Right ventricle myocardium inferior (tissue), 1 donor: ENCODE measurements at regions of chr3 and their contacts with region 1.

Region 1: DNA sequence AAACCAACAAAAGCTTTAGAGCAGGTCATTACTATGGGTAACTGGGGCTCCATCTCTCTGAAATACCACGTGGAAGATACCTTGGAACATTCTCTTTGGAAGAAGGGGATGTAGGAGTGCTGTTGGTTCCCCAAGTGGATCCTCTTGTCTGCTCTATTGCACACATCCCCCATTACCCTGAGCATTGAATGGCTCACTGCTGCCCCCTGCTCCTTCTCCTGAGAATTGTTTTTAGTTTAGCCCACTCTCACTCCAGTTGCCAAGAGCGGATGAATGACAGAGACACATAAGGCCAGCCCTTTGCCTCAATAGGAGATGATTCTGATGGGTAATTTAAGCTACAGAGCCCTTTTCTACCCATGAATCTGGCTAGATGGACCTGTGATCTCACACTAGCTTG is 135.6 kb upstream of the SUCLG2 start:
- DNase-seq: no peak
- ATAC-seq: no peak

Region 2: GRCh38 chr3:67384760-67385397 is 405.2 kb before region 1 on chr3:
- intact Hi-C with region 1: loop called (anchors 5 kb)
- DNase-seq: no peak
- ATAC-seq: peak; percentile 56

Region 3: GRCh38 chr3:67821135-67821534 is 31.1 kb after region 1 on chr3:
- intact Hi-C with region 1: no loop called
- DNase-seq: no peak
- ATAC-seq: no peak